ENCODE measurements at regions of chr22 and their contacts with region 1.

Region 1: GRCh38 chr22:30413745-30414524 is 11.6 kb upstream of the MTFP1 start:
- DNase-seq: peak in 1 of 9 experiments; percentile 19
- ATAC-seq: peak; percentile 58
- H3K4me3 ChIP-seq: peak overlapping the region in 1 of 2 experiments; percentile 4
- H3K4me3 Mint-ChIP-seq: peak overlapping the region; percentile 38
- H3K27ac ChIP-seq: peak overlapping the region; percentile 9 to 36
- H3K27ac Mint-ChIP-seq: peak overlapping the region; percentile 88
- H3K4me1 ChIP-seq: peaks cover 38% of the 10 kb centered on the region
- H3K4me1 Mint-ChIP-seq: peaks cover 41% of the 10 kb centered on the region
- H3K27me3 ChIP-seq: no peaks in the 10 kb centered on the region
- H3K27me3 Mint-ChIP-seq: no peaks in the 10 kb centered on the region
- CTCF ChIP-seq: no peak

Region 2: DNA sequence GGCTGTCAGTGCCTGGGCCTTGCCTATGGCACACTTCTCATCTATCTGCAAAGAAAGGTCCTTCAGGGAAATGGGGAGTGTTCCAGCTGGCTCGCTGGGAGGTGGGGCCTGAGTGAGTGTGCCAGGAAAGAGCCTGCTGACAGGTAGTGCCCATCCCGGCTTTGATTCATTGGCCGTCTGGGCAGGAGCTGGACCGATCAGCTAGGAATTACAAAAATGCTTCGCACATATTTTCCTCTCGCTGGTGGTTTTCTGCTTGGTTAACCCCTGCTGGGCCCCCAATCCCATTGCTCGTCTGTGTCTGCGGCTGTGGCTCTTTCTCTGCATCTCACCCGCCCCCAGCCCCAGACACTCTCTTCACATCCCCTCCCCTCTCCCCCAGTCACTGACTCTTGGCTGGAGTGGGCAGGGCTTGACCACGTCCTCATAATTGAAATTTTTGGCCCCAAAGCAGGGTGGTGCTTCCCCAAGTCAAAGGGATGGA is 178.2 kb before region 1 on chr22:
- CTCF ChIA-PET with region 1: no interaction called
- POLR2A ChIA-PET with region 1: no interaction called
- intact Hi-C with region 1: no loop called
- DNase-seq: no peak
- ATAC-seq: no peak
- H3K4me3 ChIP-seq: no peak overlapping the region
- H3K4me3 Mint-ChIP-seq: no peak overlapping the region
- H3K27ac ChIP-seq: no peak overlapping the region
- H3K27ac Mint-ChIP-seq: no peak overlapping the region
- H3K4me1 ChIP-seq: no peaks in the 10 kb centered on the region
- H3K4me1 Mint-ChIP-seq: no peaks in the 10 kb centered on the region
- H3K27me3 ChIP-seq: no peaks in the 10 kb centered on the region
- H3K27me3 Mint-ChIP-seq: no peaks in the 10 kb centered on the region
- CTCF ChIP-seq: no peak

Region 3: GRCh38 chr22:30396871-30397655 is 16.9 kb before region 1 on chr22 and contains the start of gene SEC14L2:
- CTCF ChIA-PET with region 1: interaction called, 12 read pairs
- POLR2A ChIA-PET with region 1: interaction called, 11 read pairs
- intact Hi-C with region 1: no loop called
- DNase-seq: peak; percentile 20 to 76 (median 65)
- ATAC-seq: peak; percentile 81
- H3K4me3 ChIP-seq: peak within 1 kb of the TSS; percentile 52 to 76
- H3K4me3 Mint-ChIP-seq: peak within 1 kb of the TSS; percentile 89
- H3K27ac ChIP-seq: peak within 1 kb of the TSS in 1 of 2 experiments; percentile 35
- H3K27ac Mint-ChIP-seq: peak within 1 kb of the TSS; percentile 84
- H3K4me1 ChIP-seq: peaks cover 47% of the 10 kb centered on the region
- H3K4me1 Mint-ChIP-seq: peaks cover 59% of the 10 kb centered on the region
- H3K27me3 ChIP-seq: peaks cover 0 to 11% of the 10 kb centered on the region in 2 experiments
- H3K27me3 Mint-ChIP-seq: no peaks in the 10 kb centered on the region
- CTCF ChIP-seq: no peak
- total RNA-seq, gene SEC14L2: 239 to 241 TPM

Measured in CD8-positive, alpha-beta T cell (primary cell).